ENCODE measurements at regions of chr12 and their contacts with region 1.

Region 1: DNA sequence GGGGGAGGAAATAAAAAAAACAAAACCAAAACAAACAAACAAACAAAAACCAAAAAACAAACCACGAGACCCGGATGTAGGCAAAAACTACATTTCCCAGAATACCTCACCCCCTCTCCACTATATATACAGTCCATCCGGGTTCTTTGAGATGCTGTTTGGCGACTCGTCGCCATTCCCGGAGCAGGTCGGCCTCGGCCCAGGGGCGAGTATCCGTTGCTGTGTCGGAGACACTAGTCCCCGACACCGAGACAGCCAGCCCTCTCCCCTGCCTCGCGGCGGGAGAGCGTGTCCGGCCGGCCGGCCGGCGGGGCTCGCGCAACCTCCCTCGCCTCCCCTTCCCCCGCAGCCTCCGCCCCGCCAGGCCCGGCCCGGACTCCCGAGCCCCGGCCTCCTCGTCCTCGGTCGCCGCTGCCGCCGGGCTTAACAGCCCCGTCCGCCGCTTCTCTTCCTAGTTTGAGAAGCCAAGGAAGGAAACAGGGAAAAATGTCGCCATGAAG is at the start of gene RNF10:
- DNase-seq: peak; percentile 84
- ATAC-seq: peak; percentile 76
- H3K4me3 ChIP-seq: peak within 1 kb of the TSS; percentile 72 to 95 (median 88)
- H3K27ac ChIP-seq: peak within 1 kb of the TSS; percentile 80
- H3K4me1 ChIP-seq: peaks cover 29% of the 10 kb centered on the region
- H3K27me3 ChIP-seq: no peaks in the 10 kb centered on the region
- CTCF ChIP-seq: no peak
- EP300 ChIP-seq: no peak
- POLR2A ChIP-seq: peak; percentile 93 to 96
- RAD21 ChIP-seq: 0 out of 2 replicates have a peak, but pooled peaks have one; percentile 22
- total RNA-seq, gene RNF10: 62.5 and 86.7 TPM in 2 replicates

Region 2: DNA sequence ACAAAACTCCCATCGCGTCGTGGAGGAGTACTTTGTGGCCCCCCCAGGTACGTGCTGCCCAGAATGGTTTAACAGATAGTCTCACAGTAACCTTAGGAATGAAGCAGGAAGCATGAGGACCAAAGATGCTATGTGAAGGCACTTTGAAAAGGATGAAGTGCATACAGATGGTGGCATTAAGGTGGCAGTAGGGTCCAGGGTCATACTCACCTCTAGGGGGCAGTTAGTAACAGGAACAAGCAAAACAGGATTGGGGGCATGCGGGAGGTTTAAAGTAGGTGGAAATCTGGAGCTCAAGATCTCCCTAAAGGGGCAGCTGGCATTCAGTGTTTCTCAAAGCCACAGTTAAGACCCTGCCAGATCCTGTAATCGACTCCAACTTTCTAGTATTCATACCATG is 77.1 kb before region 1 on chr12:
- CTCF ChIA-PET with region 1: no interaction called
- POLR2A ChIA-PET with region 1: no interaction called
- in situ Hi-C with region 1: no loop called
- intact Hi-C with region 1: loop called (anchors 5 kb)
- DNase-seq: peak; percentile 24
- ATAC-seq: peak; percentile 63
- H3K4me3 ChIP-seq: no peak overlapping the region
- H3K27ac ChIP-seq: no peak overlapping the region
- H3K4me1 ChIP-seq: no peaks in the 10 kb centered on the region
- H3K27me3 ChIP-seq: no peaks in the 10 kb centered on the region
- CTCF ChIP-seq: peak; percentile 52
- EP300 ChIP-seq: no peak
- POLR2A ChIP-seq: 0 out of 4 replicates have a peak, but pooled peaks of 1 of the 2 experiments have one; percentile 23
- RAD21 ChIP-seq: no peak

Region 3: GRCh38 chr12:120495723-120496412 is 38.4 kb before region 1 on chr12 and contains the start of gene DYNLL1:
- CTCF ChIA-PET with region 1: no interaction called
- POLR2A ChIA-PET with region 1: interaction called, 30 read pairs
- in situ Hi-C with region 1: no loop called
- intact Hi-C with region 1: loop called (anchors 5 kb)
- DNase-seq: peak; percentile 93
- ATAC-seq: peak; percentile 94
- H3K4me3 ChIP-seq: peak within 1 kb of the TSS; percentile 95 to 100 (median 97)
- H3K27ac ChIP-seq: peak within 1 kb of the TSS; percentile 69
- H3K4me1 ChIP-seq: peaks cover 28% of the 10 kb centered on the region
- H3K27me3 ChIP-seq: no peaks in the 10 kb centered on the region; a peak in 1 of 5 replicates
- CTCF ChIP-seq: no peak; the same call in 1 of the 2 replicates
- EP300 ChIP-seq: peak in 1 of 2 experiments; percentile 55; a peak in 3 of 4 replicates
- POLR2A ChIP-seq: peak; percentile 95 to 100
- RAD21 ChIP-seq: peak; percentile 6; the same call in 1 of the 2 replicates
- total RNA-seq, gene DYNLL1: 271 and 403 TPM in 2 replicates

Region 4: GRCh38 chr12:120554678-120555077 is 20.4 kb after region 1 on chr12:
- CTCF ChIA-PET with region 1: no interaction called
- POLR2A ChIA-PET with region 1: interaction called, 20 read pairs
- in situ Hi-C with region 1: no loop called
- intact Hi-C with region 1: loop called (anchors 2 kb)
- DNase-seq: no peak
- ATAC-seq: no peak
- H3K4me3 ChIP-seq: no peak overlapping the region
- H3K27ac ChIP-seq: no peak overlapping the region
- H3K4me1 ChIP-seq: peaks cover 22% of the 10 kb centered on the region
- H3K27me3 ChIP-seq: no peaks in the 10 kb centered on the region
- CTCF ChIP-seq: no peak
- EP300 ChIP-seq: no peak
- POLR2A ChIP-seq: no peak
- RAD21 ChIP-seq: no peak

Measured in HepG2 (cell line).